Upper lobe of right lung (tissue), 1 donor: ENCODE measurements at regions of chr16 and their contacts with region 1.

Region 1: DNA sequence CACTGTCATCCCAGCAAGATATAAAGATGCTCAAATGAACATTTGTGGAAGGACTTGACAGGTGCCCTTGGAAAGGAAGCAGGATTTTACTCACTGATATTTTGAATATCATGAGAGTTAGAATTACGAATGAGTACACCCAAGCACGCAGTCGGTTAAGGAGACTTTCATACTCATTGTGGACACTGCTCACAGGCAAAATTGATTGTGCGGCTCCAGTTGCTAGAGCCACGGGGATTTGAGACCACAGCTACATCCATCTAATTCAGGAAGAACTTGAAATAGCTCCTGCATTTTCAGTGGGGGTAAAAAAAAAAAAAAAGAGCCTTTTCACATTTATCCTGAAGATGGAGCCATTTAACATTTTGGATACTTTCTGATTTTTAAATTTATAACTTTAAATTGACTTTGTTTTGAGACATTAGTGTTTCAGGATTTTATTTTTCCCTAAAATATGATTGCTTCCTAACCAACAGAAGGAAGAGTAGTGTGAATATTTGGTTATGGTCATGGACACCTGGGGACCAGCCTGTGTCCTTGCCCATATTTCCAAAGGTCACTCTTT is 1080.1 kb upstream of the EEF2KMT start:
- DNase-seq: no peak
- ATAC-seq: no peak
- H3K4me3 ChIP-seq: no peak overlapping the region
- H3K27ac ChIP-seq: no peak overlapping the region
- H3K4me1 ChIP-seq: no peaks in the 10 kb centered on the region
- H3K27me3 ChIP-seq: no peaks in the 10 kb centered on the region
- CTCF ChIP-seq: no peak

Region 2: DNA sequence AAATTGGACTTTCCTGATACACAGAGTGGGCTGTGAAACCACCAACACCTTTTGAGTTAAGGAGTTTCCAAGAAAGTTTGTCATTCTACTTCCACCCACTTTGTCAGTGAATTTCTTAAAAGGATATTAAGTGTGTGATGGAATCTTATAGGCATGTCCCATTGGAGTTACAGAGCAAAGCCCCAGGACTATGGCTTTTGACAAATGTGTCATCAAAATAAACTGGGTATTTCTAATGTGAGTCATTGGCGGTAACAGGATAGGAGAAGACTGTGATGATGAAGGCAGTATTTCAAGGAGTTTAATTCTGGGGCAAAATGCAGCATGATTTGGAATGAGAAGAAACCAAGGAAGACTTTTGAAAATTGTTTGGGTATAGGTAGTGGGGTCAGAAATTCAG is 66.3 kb before region 1 on chr16:
- intact Hi-C with region 1: loop called (anchors 10 kb)
- DNase-seq: no peak
- ATAC-seq: no peak
- H3K4me3 ChIP-seq: no peak overlapping the region
- H3K27ac ChIP-seq: no peak overlapping the region
- H3K4me1 ChIP-seq: no peaks in the 10 kb centered on the region
- H3K27me3 ChIP-seq: no peaks in the 10 kb centered on the region
- CTCF ChIP-seq: no peak

Region 3: DNA sequence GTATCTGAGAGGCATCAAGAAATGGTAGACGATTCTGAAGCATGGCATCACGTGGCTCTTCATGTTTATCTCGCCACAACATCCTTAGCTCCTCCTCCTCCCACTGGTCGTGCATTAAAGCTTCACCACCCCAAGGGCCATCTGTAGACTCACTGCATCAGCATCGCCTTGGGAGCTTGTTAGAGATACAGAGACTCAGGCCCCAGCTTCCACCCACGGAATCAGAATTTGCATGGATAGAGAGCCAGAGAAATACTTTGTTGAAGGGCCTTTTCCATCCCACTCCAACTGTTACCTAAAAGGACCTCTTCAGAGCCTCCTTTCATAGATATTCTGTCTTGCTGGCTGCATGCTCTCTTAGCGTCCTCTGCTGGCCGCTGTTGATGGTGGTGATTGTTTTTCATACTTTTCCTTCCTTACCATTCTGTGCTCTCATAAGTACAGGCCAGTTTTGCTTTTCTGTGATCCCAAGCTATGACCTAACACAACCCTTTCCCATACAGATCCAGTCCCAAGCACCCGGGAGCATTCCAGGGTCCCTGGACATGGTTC is 30.7 kb before region 1 on chr16:
- intact Hi-C with region 1: no loop called
- DNase-seq: no peak
- ATAC-seq: no peak
- H3K4me3 ChIP-seq: no peak overlapping the region
- H3K27ac ChIP-seq: no peak overlapping the region
- H3K4me1 ChIP-seq: no peaks in the 10 kb centered on the region
- H3K27me3 ChIP-seq: no peaks in the 10 kb centered on the region
- CTCF ChIP-seq: no peak